CD8-positive, alpha-beta memory T cell (primary cell): ENCODE measurements at regions of chr4 and their contacts with region 1.

Region 1: DNA sequence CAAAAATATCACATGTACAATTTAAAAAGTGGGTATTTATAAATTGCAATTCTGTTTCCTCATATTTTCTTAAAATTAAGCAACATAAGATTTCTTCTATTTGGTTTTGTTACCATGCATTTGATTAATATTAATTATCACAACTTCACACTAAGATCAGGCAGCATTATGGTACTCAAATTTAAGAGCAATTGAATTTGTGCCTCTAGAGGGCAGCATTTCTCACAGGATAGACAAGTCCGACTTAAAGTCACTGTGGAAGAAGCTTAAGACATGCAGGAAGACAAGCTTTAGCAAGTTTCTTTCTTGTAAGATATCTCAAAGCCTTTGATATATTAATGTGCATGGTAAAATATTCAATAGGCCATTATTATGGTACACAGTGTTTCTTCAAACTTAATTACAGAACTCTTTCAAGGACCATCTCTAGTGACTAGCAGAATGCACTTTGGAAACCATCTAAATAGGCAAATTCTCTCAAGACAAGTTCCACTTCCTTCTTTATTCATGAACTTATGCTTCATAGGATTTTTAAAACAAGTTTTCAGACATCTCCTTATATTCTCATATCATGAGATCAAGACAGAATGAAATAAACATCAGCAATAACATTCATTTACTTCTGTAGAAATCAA is 35.0 kb downstream of the FBXW7 start:
- DNase-seq: peak; percentile 15 to 73 (median 63)
- H3K4me3 ChIP-seq: no peak overlapping the region
- H3K4me3 Mint-ChIP-seq: no peak overlapping the region
- H3K27ac ChIP-seq: no peak overlapping the region
- H3K27ac Mint-ChIP-seq: peak overlapping the region in 3 of 8 donors; percentile 8 to 54 (median 18)
- H3K4me1 ChIP-seq: peaks cover 5% of the 10 kb centered on the region
- H3K4me1 Mint-ChIP-seq: peaks cover 27 to 63% (median 54%) of the 10 kb centered on the region in 3 donors
- H3K27me3 ChIP-seq: no peaks in the 10 kb centered on the region
- H3K27me3 Mint-ChIP-seq: no peaks in the 10 kb centered on the region

Region 2: DNA sequence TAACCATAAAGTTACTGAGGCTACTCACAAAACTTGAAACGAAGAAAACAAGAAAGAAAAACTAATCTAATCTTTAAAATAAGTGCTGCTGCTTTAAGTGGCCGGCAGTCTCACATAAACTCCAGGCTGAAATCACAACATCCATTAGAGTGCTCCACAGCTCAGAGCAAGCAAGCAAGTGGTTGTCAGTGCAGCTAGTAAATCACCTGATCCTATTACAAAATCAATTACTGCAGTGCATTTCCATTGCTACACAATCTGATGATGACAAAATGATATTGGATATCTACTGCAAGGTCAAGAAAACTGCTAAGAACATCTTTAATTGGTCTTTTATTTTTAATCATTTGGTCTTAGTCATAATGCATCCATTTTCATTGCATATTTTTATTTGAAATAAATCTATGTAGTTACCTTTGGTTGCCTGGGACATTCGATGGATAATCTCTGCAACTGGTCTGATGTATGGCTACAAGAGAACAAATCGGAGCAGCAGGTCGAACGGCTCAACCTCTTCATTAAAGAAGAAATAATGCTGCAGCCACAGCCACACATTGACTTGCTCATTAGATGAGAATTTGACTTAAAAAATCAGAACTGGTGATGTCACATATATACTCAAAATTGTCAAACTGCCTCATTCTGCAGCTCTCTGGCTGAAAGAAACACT is 52.7 kb before region 1 on chr4:
- CTCF ChIA-PET with region 1: no interaction called
- POLR2A ChIA-PET with region 1: no interaction called
- DNase-seq: no peak
- H3K4me3 ChIP-seq: no peak overlapping the region
- H3K4me3 Mint-ChIP-seq: peak overlapping the region in 1 of 7 donors; percentile 20
- H3K27ac ChIP-seq: no peak overlapping the region
- H3K27ac Mint-ChIP-seq: no peak overlapping the region
- H3K4me1 ChIP-seq: peaks cover 4% of the 10 kb centered on the region
- H3K4me1 Mint-ChIP-seq: peaks cover 34 to 52% (median 49%) of the 10 kb centered on the region in 3 donors
- H3K27me3 ChIP-seq: no peaks in the 10 kb centered on the region
- H3K27me3 Mint-ChIP-seq: no peaks in the 10 kb centered on the region

Region 3: DNA sequence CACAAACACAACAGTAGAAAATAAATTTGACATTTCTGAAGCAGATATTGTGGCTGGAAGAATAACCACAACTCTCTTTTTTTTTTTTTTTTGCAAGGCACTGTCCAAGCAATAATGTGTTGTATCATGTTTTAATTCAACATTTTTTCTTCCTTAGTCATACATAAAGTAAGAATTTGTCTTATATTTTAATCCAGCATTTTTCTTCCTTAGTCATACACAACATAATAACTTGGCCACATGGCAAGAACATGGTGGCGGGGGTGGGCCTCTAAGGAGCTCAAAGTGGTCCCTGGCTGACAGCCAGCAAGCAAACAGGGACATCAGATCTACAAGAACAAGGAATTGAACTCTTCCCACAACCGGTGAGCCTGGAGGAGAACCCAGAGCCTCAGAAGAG is 14.8 kb after region 1 on chr4:
- CTCF ChIA-PET with region 1: interaction called, 15 read pairs
- POLR2A ChIA-PET with region 1: interaction called, 3 read pairs
- DNase-seq: no peak
- H3K4me3 ChIP-seq: no peak overlapping the region
- H3K4me3 Mint-ChIP-seq: no peak overlapping the region
- H3K27ac ChIP-seq: no peak overlapping the region
- H3K27ac Mint-ChIP-seq: peak overlapping the region in 1 of 8 donors; percentile 36
- H3K4me1 ChIP-seq: no peaks in the 10 kb centered on the region
- H3K4me1 Mint-ChIP-seq: peaks cover 50 to 78% (median 71%) of the 10 kb centered on the region in 3 donors
- H3K27me3 ChIP-seq: no peaks in the 10 kb centered on the region
- H3K27me3 Mint-ChIP-seq: no peaks in the 10 kb centered on the region

Region 4: DNA sequence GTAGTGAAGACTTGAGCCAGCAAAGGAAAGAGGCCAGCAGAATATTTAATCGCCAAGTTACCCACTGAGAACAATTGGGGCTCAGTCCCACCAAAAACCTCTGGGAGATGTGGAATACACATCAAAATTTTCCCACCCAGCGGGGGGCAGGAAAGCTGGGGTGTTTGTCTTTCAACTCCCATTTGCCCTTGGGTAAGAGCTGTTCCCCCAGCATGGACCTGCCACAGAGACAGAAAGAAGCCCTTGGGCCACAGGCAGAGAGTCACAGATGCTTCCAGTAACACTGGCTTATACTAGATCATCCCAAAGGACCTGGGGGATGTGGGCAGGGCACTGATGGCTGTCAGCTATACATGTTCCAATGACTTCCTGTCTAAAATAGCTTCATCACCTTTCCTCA is 53.8 kb after region 1 on chr4:
- CTCF ChIA-PET with region 1: interaction called, 17 read pairs
- POLR2A ChIA-PET with region 1: no interaction called
- DNase-seq: no peak
- H3K4me3 ChIP-seq: peak overlapping the region; percentile 31
- H3K4me3 Mint-ChIP-seq: peak overlapping the region in 5 of 7 donors; percentile 38 to 74 (median 52)
- H3K27ac ChIP-seq: no peak overlapping the region
- H3K27ac Mint-ChIP-seq: peak overlapping the region; percentile 53 to 99 (median 92)
- H3K4me1 ChIP-seq: peaks cover 33% of the 10 kb centered on the region
- H3K4me1 Mint-ChIP-seq: peaks cover 32 to 62% (median 45%) of the 10 kb centered on the region in 3 donors
- H3K27me3 ChIP-seq: no peaks in the 10 kb centered on the region
- H3K27me3 Mint-ChIP-seq: peaks cover 0 to 1% of the 10 kb centered on the region in 2 donors

Region 5: GRCh38 chr4:152634110-152634760 is 133.3 kb after region 1 on chr4:
- CTCF ChIA-PET with region 1: interaction called, 172 read pairs
- POLR2A ChIA-PET with region 1: no interaction called
- DNase-seq: no peak
- H3K4me3 ChIP-seq: no peak overlapping the region
- H3K4me3 Mint-ChIP-seq: no peak overlapping the region
- H3K27ac ChIP-seq: no peak overlapping the region
- H3K27ac Mint-ChIP-seq: peak overlapping the region in 1 of 8 donors; percentile 1
- H3K4me1 ChIP-seq: no peaks in the 10 kb centered on the region
- H3K4me1 Mint-ChIP-seq: no peaks in the 10 kb centered on the region
- H3K27me3 ChIP-seq: no peaks in the 10 kb centered on the region
- H3K27me3 Mint-ChIP-seq: no peaks in the 10 kb centered on the region

Region 6: GRCh38 chr4:152735396-152735859 is 234.5 kb after region 1 on chr4:
- CTCF ChIA-PET with region 1: interaction called, 18 read pairs
- POLR2A ChIA-PET with region 1: no interaction called
- DNase-seq: peak in 1 of 5 donors; percentile 17
- H3K4me3 ChIP-seq: no peak overlapping the region
- H3K4me3 Mint-ChIP-seq: no peak overlapping the region
- H3K27ac ChIP-seq: no peak overlapping the region
- H3K27ac Mint-ChIP-seq: peak overlapping the region in 1 of 8 donors; percentile 2
- H3K4me1 ChIP-seq: no peaks in the 10 kb centered on the region
- H3K4me1 Mint-ChIP-seq: no peaks in the 10 kb centered on the region
- H3K27me3 ChIP-seq: no peaks in the 10 kb centered on the region
- H3K27me3 Mint-ChIP-seq: peaks cover 3 to 4% of the 10 kb centered on the region in 2 donors